ENCODE measurements at regions of chr6 and their contacts with region 1.

Region 1: DNA sequence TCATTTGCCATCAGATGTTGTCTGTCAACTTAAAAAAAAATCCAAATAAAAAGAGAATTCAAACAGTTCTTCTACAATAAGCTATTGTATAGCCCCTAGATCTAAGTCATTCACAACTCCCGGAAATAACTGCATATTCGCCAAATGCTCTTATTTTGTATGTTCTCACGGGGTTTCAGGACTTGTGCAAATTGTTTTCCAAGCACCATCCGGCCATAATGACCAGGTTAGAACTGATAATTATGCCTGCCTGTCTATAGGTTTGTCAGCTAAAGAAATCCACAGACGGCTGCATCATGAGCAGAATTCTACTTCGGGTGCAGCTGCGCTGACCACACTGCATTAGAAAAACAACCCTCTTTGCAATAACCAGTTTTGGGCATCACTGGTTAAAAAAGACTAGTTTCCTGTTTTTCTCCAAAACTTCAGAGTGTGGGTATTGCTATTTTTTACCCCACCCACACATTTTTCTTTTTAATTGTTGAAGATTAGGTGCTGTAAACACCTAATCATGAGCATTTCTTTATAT is 87.7 kb downstream of the HIVEP2 start:
- DNase-seq: peak in 11 of 14 experiments; percentile 25 to 65 (median 37)
- ATAC-seq: peak; percentile 40
- H3K4me3 ChIP-seq: peak overlapping the region; percentile 46
- H3K4me3 Mint-ChIP-seq: peak overlapping the region; percentile 82
- H3K27ac ChIP-seq: peak overlapping the region; percentile 88 to 99
- H3K27ac Mint-ChIP-seq: peak overlapping the region; percentile 94
- H3K4me1 ChIP-seq: peaks cover 69% of the 10 kb centered on the region
- H3K4me1 Mint-ChIP-seq: peaks cover 93% of the 10 kb centered on the region
- H3K27me3 ChIP-seq: no peaks in the 10 kb centered on the region
- H3K27me3 Mint-ChIP-seq: no peaks in the 10 kb centered on the region
- CTCF ChIP-seq: no peak

Region 2: GRCh38 chr6:142566628-142567396 is 290.5 kb before region 1 on chr6:
- CTCF ChIA-PET with region 1: no interaction called
- POLR2A ChIA-PET with region 1: interaction called, 12 read pairs
- intact Hi-C with region 1: no loop called
- DNase-seq: peak; percentile 14 to 76 (median 47)
- ATAC-seq: peak; percentile 62
- H3K4me3 ChIP-seq: no peak overlapping the region
- H3K4me3 Mint-ChIP-seq: peak overlapping the region; percentile 57
- H3K27ac ChIP-seq: no peak overlapping the region
- H3K27ac Mint-ChIP-seq: peak overlapping the region; percentile 79
- H3K4me1 ChIP-seq: peaks cover 35% of the 10 kb centered on the region
- H3K4me1 Mint-ChIP-seq: peaks cover 77% of the 10 kb centered on the region
- H3K27me3 ChIP-seq: no peaks in the 10 kb centered on the region
- H3K27me3 Mint-ChIP-seq: no peaks in the 10 kb centered on the region
- CTCF ChIP-seq: peak; percentile 82

Region 3: GRCh38 chr6:142773859-142774648 is 83.2 kb before region 1 on chr6:
- CTCF ChIA-PET with region 1: no interaction called
- POLR2A ChIA-PET with region 1: interaction called, 10 read pairs
- intact Hi-C with region 1: no loop called
- DNase-seq: peak in 4 of 14 experiments; percentile 22 to 74 (median 60)
- ATAC-seq: peak; percentile 85
- H3K4me3 ChIP-seq: peak overlapping the region; percentile 5
- H3K4me3 Mint-ChIP-seq: peak overlapping the region; percentile 63
- H3K27ac ChIP-seq: peak overlapping the region; percentile 1 to 46
- H3K27ac Mint-ChIP-seq: peak overlapping the region; percentile 84
- H3K4me1 ChIP-seq: peaks cover 27% of the 10 kb centered on the region
- H3K4me1 Mint-ChIP-seq: peaks cover 44% of the 10 kb centered on the region
- H3K27me3 ChIP-seq: no peaks in the 10 kb centered on the region
- H3K27me3 Mint-ChIP-seq: no peaks in the 10 kb centered on the region
- CTCF ChIP-seq: no peak

Region 4: DNA sequence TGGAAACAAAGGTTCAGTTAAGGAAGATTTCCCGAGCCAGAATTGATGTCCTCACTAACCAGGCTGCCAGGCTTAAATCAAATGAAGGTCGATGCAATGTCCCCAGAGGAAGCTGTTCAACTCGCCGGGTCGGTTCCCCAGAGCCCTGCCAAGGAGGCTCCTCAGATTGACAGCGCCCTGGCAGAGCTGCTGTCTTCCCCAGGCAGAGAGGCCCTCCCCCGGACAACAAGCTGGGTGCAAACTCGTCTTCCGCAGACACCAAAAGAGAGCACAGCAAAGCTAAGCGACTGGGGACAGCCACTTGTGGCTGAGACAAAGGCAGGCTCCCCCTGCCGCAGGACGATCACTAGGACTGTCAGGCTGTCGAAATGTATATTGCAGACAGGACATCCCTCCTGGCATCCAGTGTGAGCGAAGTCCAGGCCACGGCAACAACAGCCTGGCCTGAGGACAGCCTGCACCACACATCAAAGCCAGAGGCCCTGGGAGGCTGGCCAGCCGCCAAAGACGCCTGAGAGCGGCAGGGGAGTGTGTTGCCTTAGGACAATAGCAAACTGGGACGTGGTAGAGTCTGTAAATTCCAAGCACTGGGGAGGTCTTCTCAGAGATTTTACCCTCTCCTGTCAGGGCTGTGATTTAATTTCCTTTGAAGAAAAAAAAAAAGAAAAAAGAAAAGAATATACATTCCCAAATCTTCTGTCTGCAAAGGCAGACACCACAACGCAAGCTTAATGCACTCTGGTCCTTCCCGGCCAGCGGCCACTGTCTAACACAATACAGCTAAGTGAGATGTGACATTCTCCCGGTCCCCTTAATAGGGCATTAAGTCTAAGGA is 11.5 kb before region 1 on chr6:
- CTCF ChIA-PET with region 1: interaction called, 4 read pairs
- POLR2A ChIA-PET with region 1: interaction called, 323 read pairs
- intact Hi-C with region 1: loop called in 1 of 2 experiments (anchors 1 kb)
- DNase-seq: peak; percentile 48 to 84 (median 66)
- ATAC-seq: peak; percentile 50
- H3K4me3 ChIP-seq: peak overlapping the region; percentile 53
- H3K4me3 Mint-ChIP-seq: peak overlapping the region; percentile 85
- H3K27ac ChIP-seq: peak overlapping the region; percentile 88 to 93
- H3K27ac Mint-ChIP-seq: peak overlapping the region; percentile 94
- H3K4me1 ChIP-seq: peaks cover 49% of the 10 kb centered on the region
- H3K4me1 Mint-ChIP-seq: peaks cover 97% of the 10 kb centered on the region
- H3K27me3 ChIP-seq: no peaks in the 10 kb centered on the region
- H3K27me3 Mint-ChIP-seq: no peaks in the 10 kb centered on the region
- CTCF ChIP-seq: no peak

Region 5: DNA sequence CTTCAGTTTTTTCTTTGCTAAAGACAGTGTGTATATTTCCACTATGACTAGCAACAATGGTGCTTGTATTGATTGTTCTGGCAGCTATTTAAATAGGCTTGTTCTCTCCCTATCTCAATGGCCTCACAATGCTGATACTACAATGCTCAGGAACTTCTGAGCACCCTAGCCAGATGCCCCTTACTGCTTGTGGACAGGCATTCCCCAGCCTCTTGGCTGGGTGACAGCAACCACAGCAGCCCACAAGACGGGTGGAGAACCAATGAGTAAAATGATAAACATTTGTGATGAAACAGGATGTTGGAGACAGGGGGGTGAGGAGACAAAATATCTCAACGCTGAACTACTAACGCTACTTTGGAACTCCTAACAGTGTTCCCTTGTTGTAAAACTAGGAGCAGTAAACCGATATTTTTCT is 45.3 kb after region 1 on chr6:
- CTCF ChIA-PET with region 1: no interaction called
- POLR2A ChIA-PET with region 1: interaction called, 42 read pairs
- intact Hi-C with region 1: loop called (anchors 1 to 5 kb)
- DNase-seq: peak; percentile 55 to 95 (median 70)
- ATAC-seq: peak; percentile 57
- H3K4me3 ChIP-seq: peak overlapping the region; percentile 62
- H3K4me3 Mint-ChIP-seq: peak overlapping the region; percentile 81
- H3K27ac ChIP-seq: peak overlapping the region; percentile 86 to 93
- H3K27ac Mint-ChIP-seq: no peak overlapping the region
- H3K4me1 ChIP-seq: peaks cover 40% of the 10 kb centered on the region
- H3K4me1 Mint-ChIP-seq: peaks cover 26% of the 10 kb centered on the region
- H3K27me3 ChIP-seq: no peaks in the 10 kb centered on the region
- H3K27me3 Mint-ChIP-seq: no peaks in the 10 kb centered on the region
- CTCF ChIP-seq: no peak

Measured in CD4-positive, alpha-beta T cell (primary cell).